CD4-positive, alpha-beta memory T cell (primary cell): ENCODE measurements at regions of chr19 and their contacts with region 1.

Region 1: GRCh38 chr19:18152444-18152816 is 533 bp upstream of the PIK3R2 start:
- DNase-seq: peak; percentile 96 to 99 (median 96)
- H3K4me3 ChIP-seq: peak overlapping the region; percentile 74 to 79
- H3K4me3 Mint-ChIP-seq: peak overlapping the region; percentile 84 to 95 (median 91)
- H3K27ac ChIP-seq: peak overlapping the region; percentile 74
- H3K27ac Mint-ChIP-seq: peak overlapping the region; percentile 88 to 99 (median 97)
- H3K4me1 ChIP-seq: peaks cover 28% of the 10 kb centered on the region
- H3K4me1 Mint-ChIP-seq: peaks cover 14 to 38% (median 21%) of the 10 kb centered on the region in 4 donors
- H3K27me3 ChIP-seq: no peaks in the 10 kb centered on the region
- H3K27me3 Mint-ChIP-seq: no peaks in the 10 kb centered on the region

Region 2: DNA sequence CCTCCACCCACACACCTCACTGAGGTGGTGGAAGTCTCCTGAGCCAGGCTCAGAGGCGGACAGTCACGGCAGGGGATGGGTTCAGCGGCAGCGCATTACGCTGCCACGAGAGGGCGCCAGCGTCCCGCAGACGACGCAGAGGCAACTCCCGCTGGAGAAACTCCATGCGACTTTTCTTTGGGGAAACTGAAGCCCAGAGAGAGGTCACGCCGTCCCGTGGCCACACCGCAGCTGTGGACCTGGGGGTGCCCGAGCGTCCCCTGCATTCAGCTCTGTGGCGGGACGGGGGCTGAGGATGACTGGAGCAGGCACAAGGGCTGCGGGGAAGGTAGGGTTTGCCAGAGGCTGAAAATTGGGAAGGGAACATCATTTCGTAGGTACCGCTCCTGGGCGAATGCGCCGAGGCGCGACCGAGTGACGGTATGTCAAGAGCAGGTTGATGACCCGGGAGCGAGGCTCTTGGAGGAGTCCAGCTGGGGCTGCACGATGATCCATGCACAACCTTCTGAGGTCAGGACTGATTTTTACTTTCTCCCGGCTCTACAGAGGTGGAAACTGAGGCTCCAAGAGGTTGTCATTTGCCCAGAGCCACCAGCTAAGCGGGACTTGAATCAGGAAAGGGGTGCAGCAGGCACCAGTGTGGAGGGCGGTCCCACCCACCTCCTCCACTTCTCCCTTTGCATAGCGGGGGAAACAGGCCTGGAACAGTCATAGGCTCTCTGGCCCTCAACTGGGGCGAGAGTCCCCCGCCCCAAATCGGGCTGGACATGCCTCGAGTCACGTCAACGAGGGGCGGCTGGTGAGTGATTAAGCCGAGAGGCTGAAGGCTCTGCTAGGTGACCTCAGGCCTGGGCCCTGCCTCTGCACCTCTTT is 145.2 kb before region 1 on chr19:
- CTCF ChIA-PET with region 1: no interaction called
- POLR2A ChIA-PET with region 1: interaction called, 12 read pairs
- intact Hi-C with region 1: loop called (anchors 2 kb)
- DNase-seq: peak; percentile 75 to 85 (median 79)
- H3K4me3 ChIP-seq: peak overlapping the region; percentile 18 to 68
- H3K4me3 Mint-ChIP-seq: peak overlapping the region; percentile 86 to 95 (median 90)
- H3K27ac ChIP-seq: peak overlapping the region; percentile 95
- H3K27ac Mint-ChIP-seq: peak overlapping the region; percentile 95 to 100 (median 97)
- H3K4me1 ChIP-seq: peaks cover 56% of the 10 kb centered on the region
- H3K4me1 Mint-ChIP-seq: peaks cover 10 to 59% (median 28%) of the 10 kb centered on the region in 4 donors
- H3K27me3 ChIP-seq: no peaks in the 10 kb centered on the region
- H3K27me3 Mint-ChIP-seq: no peaks in the 10 kb centered on the region

Region 3: GRCh38 chr19:18091217-18091608 is 61.2 kb before region 1 on chr19:
- CTCF ChIA-PET with region 1: interaction called, 10 read pairs
- POLR2A ChIA-PET with region 1: interaction called, 18 read pairs
- intact Hi-C with region 1: loop called (anchors 1 kb)
- DNase-seq: peak; percentile 81 to 91 (median 83)
- H3K4me3 ChIP-seq: peak overlapping the region in 1 of 2 donors; percentile 16
- H3K4me3 Mint-ChIP-seq: peak overlapping the region in 7 of 8 donors; percentile 68 to 83 (median 75)
- H3K27ac ChIP-seq: peak overlapping the region; percentile 85
- H3K27ac Mint-ChIP-seq: peak overlapping the region; percentile 98 to 100 (median 99)
- H3K4me1 ChIP-seq: peaks cover 68% of the 10 kb centered on the region
- H3K4me1 Mint-ChIP-seq: peaks cover 39 to 76% (median 55%) of the 10 kb centered on the region in 4 donors
- H3K27me3 ChIP-seq: no peaks in the 10 kb centered on the region
- H3K27me3 Mint-ChIP-seq: no peaks in the 10 kb centered on the region

Region 4: GRCh38 chr19:18141031-18141430 is 11.4 kb before region 1 on chr19:
- CTCF ChIA-PET with region 1: interaction called, 3 read pairs
- POLR2A ChIA-PET with region 1: interaction called, 11 read pairs
- intact Hi-C with region 1: no loop called
- DNase-seq: no peak
- H3K4me3 ChIP-seq: no peak overlapping the region
- H3K4me3 Mint-ChIP-seq: no peak overlapping the region
- H3K27ac ChIP-seq: no peak overlapping the region
- H3K27ac Mint-ChIP-seq: peak overlapping the region in 1 of 7 donors; percentile 47
- H3K4me1 ChIP-seq: no peaks in the 10 kb centered on the region
- H3K4me1 Mint-ChIP-seq: no peaks in the 10 kb centered on the region
- H3K27me3 ChIP-seq: no peaks in the 10 kb centered on the region
- H3K27me3 Mint-ChIP-seq: no peaks in the 10 kb centered on the region

Region 5: GRCh38 chr19:18192673-18193387 is 40.4 kb after region 1 on chr19 and contains the start of gene MPV17L2:
- CTCF ChIA-PET with region 1: no interaction called
- POLR2A ChIA-PET with region 1: interaction called, 17 read pairs
- intact Hi-C with region 1: loop called (anchors 1 kb)
- DNase-seq: peak; percentile 98 to 100 (median 99)
- H3K4me3 ChIP-seq: peak within 1 kb of the TSS; percentile 63 to 83
- H3K4me3 Mint-ChIP-seq: peak within 1 kb of the TSS; percentile 87 to 96 (median 92)
- H3K27ac ChIP-seq: peak within 1 kb of the TSS; percentile 73
- H3K27ac Mint-ChIP-seq: peak within 1 kb of the TSS; percentile 89 to 98 (median 96)
- H3K4me1 ChIP-seq: peaks cover 22% of the 10 kb centered on the region
- H3K4me1 Mint-ChIP-seq: peaks cover 11 to 26% (median 20%) of the 10 kb centered on the region in 4 donors
- H3K27me3 ChIP-seq: no peaks in the 10 kb centered on the region
- H3K27me3 Mint-ChIP-seq: no peaks in the 10 kb centered on the region
- total RNA-seq, gene MPV17L2: 7.6 to 7.8 TPM

Region 6: DNA sequence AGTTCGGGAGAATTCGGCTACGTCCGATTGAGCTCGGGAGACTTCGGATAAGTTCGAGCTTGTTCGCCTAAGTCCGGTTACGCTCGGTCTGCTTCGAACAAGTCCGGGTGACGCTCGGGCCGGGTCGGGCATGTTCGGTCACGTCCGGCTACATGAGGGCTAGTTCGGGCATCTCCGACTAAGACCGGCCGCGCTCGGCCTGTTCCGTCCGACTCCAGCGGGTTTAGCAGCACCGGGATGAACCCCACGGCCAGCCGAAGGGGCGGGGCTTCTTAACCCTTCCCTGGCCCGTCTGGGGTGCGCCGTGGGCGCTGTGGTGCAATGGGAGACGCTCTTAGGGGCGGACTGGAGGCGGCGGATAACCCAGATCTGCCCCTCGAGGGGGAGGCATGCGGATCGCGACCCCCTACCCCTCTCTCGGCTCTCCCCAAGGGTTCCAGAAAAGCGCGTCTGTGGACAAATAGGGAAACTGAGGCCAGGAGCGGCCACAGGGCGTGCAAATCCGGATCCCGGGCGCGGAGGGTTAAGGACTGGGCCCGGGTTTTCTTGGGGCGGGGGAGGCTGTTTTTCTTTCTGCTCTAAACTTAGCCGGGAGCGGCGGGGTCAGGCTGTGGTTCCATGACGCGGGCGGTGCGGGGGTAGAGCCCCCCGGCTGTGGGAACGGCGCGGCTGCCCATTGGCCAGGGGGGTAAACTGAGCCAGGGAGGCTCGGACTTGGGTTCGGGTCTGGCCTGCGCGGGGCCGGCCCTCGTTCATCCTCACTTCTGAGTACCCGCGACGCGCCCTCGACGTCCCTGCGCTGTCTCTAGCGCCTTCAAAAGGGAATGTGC is 72.3 kb after region 1 on chr19:
- CTCF ChIA-PET with region 1: no interaction called
- POLR2A ChIA-PET with region 1: no interaction called
- intact Hi-C with region 1: loop called (anchors 2 kb)
- DNase-seq: peak; percentile 79 to 83 (median 81)
- H3K4me3 ChIP-seq: peak overlapping the region; percentile 28 to 45
- H3K4me3 Mint-ChIP-seq: peak overlapping the region; percentile 83 to 91 (median 90)
- H3K27ac ChIP-seq: no peak overlapping the region
- H3K27ac Mint-ChIP-seq: peak overlapping the region in 3 of 7 donors; percentile 66 to 77 (median 74)
- H3K4me1 ChIP-seq: peaks cover 26% of the 10 kb centered on the region
- H3K4me1 Mint-ChIP-seq: peaks cover 12 to 30% (median 22%) of the 10 kb centered on the region in 4 donors
- H3K27me3 ChIP-seq: peaks cover 26% of the 10 kb centered on the region
- H3K27me3 Mint-ChIP-seq: peaks cover 48 to 55% of the 10 kb centered on the region in 2 donors